K562 (cell line): ENCODE measurements at regions of chr7 and their contacts with region 1.

Region 1: GRCh38 chr7:74269757-74270277 is 15.6 kb upstream of the RFC2 start:
- DNase-seq: peak; percentile 50 to 81 (median 61)
- ATAC-seq: peak; percentile 67
- H3K4me3 ChIP-seq: peak overlapping the region; percentile 52
- H3K27ac ChIP-seq: no peak overlapping the region
- H3K4me1 ChIP-seq: peaks cover 31 to 32% of the 10 kb centered on the region in 2 experiments
- H3K27me3 ChIP-seq: no peaks in the 10 kb centered on the region; a peak in 1 of 5 replicates
- CTCF ChIP-seq: no peak
- EP300 ChIP-seq: no peak
- POLR2A ChIP-seq: no peak
- RAD21 ChIP-seq: no peak

Region 2: DNA sequence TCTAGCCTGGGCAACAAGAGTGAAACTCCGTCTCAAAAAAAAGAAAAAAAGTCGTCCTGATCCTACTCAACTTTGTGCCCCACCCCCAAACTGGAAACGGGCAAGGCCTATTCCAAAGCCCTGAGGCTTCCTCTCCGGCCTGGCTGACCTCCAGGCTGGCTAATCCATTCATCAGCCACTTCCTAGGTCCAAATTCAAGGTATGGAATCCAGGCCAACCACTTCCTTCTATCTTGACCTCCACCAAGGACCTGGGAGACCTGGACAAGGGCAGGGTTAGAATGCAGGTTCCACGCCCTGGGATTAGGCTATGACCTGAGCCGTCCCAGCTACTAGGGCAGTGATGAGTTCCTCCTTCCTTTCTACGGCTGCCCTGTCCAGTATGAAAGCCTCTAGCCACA is 116.1 kb before region 1 on chr7:
- CTCF ChIA-PET with region 1: no interaction called
- POLR2A ChIA-PET with region 1: no interaction called
- in situ Hi-C with region 1: no loop called
- intact Hi-C with region 1: no loop called
- DNase-seq: no peak
- ATAC-seq: no peak
- H3K4me3 ChIP-seq: no peak overlapping the region
- H3K27ac ChIP-seq: no peak overlapping the region
- H3K4me1 ChIP-seq: no peaks in the 10 kb centered on the region; a peak in 1 of 5 replicates
- H3K27me3 ChIP-seq: no peaks in the 10 kb centered on the region
- CTCF ChIP-seq: no peak
- EP300 ChIP-seq: no peak
- POLR2A ChIP-seq: no peak
- RAD21 ChIP-seq: no peak

Region 3: DNA sequence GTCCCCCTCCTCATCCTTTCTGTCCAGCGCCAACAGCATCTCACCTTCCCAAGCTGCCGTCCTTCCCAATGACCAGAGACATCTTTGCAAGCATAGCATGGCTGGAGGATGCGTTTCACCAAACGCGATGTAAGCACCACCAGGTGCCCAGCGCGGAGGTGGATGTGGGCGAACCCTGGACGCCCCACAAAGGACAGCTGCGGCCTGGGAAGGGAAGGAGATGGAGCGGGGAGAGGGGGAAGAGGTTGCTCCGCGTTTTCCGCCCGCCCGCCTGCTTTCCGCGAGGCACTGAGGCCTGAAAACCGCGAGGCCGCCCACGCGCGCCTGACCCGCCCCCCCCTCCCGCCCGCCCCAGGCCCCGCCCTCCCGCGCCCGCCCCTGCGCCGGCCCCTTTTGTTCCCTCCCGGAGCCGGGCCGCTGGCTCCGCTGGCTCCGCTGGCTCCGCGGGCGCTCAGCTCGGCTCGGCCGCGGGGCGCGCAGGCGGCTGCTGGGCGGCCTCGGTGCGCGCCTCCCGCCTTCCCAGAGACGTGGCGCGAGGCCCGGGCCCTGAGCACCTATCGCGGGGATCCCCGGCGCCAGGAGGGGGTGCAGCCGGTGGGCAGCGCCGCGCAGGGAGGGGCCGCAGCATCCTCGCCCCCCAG is 19.3 kb after region 1 on chr7 and contains the start of gene CLIP2:
- CTCF ChIA-PET with region 1: no interaction called
- POLR2A ChIA-PET with region 1: interaction called, 7 read pairs
- in situ Hi-C with region 1: no loop called
- intact Hi-C with region 1: loop called (anchors 1 kb)
- DNase-seq: peak; percentile 87 to 98 (median 96)
- ATAC-seq: peak; percentile 97
- H3K4me3 ChIP-seq: peak within 1 kb of the TSS; percentile 51
- H3K27ac ChIP-seq: peak within 1 kb of the TSS; percentile 48; the same call in 1 of the 3 replicates
- H3K4me1 ChIP-seq: peaks cover 26 to 34% of the 10 kb centered on the region in 2 experiments
- H3K27me3 ChIP-seq: peaks cover 3 to 19% of the 10 kb centered on the region in 2 experiments; a peak in 4 of 5 replicates
- CTCF ChIP-seq: 0 out of 6 replicates have a peak, but pooled peaks of 1 of the 3 experiments have one; percentile 10
- EP300 ChIP-seq: no peak
- POLR2A ChIP-seq: no peak
- RAD21 ChIP-seq: no peak; a peak in 1 of 4 replicates
- polyA plus RNA-seq, gene CLIP2: 0.07 to 0.10 TPM